ENCODE measurements at regions of chr1 and their contacts with region 1.

Region 1: GRCh38 chr1:40476924-40477677 is at the start of gene ZFP69:
- DNase-seq: peak; percentile 79
- ATAC-seq: peak; percentile 97
- H3K4me3 Mint-ChIP-seq: peak within 1 kb of the TSS; percentile 85
- H3K27ac Mint-ChIP-seq: peak within 1 kb of the TSS; percentile 87
- H3K4me1 Mint-ChIP-seq: peaks cover 17% of the 10 kb centered on the region
- H3K27me3 Mint-ChIP-seq: no peaks in the 10 kb centered on the region
- CTCF ChIP-seq: no peak
- total RNA-seq, gene ZFP69: 4.5 and 5.1 TPM in 2 replicates

Region 2: DNA sequence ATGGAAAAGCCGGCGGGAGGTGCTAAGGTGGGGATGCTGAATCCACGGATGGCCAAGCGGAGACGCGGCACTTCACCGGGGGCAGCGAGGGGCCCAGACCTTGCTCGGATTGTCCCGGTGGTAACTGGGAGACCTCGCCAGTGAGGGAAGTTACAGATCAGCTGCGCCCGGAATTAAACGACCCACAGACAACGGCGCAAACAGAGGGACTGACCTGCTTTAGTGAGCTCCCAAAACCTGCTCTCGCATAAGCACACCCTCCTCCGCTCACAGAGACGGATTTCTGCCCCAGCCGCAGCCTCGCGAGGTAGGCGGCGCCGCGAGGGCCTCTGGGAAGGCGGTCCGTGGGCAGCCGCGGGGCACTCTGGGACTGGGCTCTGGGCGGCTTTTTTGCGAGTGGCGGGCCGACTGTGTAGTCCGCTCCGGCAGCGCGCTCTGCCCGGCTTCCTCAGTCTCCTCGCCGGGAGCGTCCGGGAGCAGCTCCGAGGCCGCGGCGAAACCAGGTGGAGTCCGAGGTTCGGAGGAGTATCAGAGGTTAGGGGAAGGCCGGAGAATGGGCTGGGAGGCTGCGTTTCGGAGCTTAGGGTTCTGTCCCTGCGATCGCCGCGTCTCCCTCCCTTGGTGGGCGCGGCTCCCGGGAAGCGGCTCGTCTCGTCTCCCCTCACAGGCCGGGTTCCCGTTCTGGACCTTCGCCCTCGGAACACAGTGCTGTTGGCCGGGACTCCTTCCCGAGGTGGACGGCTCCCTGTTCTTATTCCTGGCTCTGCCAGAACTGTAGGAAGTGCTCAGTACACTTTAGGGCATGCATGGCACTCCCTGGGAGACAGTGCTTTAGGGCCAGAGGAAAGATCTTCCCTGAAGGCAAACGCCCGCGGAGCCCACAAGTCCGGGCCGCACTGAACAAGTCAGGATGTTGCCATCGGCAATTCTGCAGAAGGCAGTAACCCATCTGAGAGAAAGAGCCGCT is 31.6 kb after region 1 on chr1 and contains the start of gene EXO5:
- CTCF ChIA-PET with region 1: no interaction called
- POLR2A ChIA-PET with region 1: interaction called, 10 read pairs
- intact Hi-C with region 1: loop called (anchors 1 kb)
- DNase-seq: peak; percentile 78
- ATAC-seq: peak; percentile 98
- H3K4me3 Mint-ChIP-seq: peak within 1 kb of the TSS; percentile 94
- H3K27ac Mint-ChIP-seq: peak within 1 kb of the TSS; percentile 81
- H3K4me1 Mint-ChIP-seq: peaks cover 18% of the 10 kb centered on the region
- H3K27me3 Mint-ChIP-seq: no peaks in the 10 kb centered on the region
- CTCF ChIP-seq: no peak
- total RNA-seq, gene EXO5: 11.4 and 13.8 TPM in 2 replicates

Region 3: DNA sequence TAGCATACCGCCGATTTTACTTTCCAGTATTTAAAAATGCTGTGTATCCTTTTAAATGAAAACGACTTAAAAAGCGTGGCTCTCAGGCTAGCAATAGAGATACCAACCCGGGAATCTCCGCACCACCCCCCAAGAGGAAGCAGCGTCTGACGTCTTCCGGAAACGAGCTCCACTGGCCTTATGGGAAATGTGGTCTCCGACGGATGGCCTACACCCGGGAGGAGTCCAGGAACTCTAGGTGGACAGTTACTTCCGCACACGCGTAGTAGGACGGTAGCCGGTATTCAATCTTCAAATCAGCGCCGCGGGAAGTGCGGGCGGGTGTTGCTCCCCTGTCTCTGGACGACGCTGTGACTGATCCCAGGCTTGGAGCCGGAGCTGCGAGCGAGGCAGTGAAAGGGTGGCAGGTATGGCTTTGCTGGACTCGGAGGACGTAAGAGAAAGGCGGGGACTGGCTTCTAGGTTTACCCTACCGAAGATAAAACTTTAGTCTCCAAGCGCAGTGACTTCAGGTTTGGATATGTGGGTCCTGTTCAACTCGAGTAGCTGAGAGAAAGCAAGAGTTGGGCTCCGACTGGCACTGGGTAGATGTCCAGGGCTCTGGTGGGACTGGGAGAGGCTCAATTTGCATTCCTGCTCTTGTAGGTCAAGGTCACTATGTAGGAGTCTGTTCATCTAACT is 54.4 kb after region 1 on chr1 and contains the start of gene ZNF684:
- CTCF ChIA-PET with region 1: interaction called, 5 read pairs
- POLR2A ChIA-PET with region 1: interaction called, 3 read pairs
- intact Hi-C with region 1: loop called (anchors 2 kb)
- DNase-seq: peak; percentile 65
- ATAC-seq: peak; percentile 98
- H3K4me3 Mint-ChIP-seq: peak within 1 kb of the TSS; percentile 97
- H3K27ac Mint-ChIP-seq: peak within 1 kb of the TSS; percentile 92
- H3K4me1 Mint-ChIP-seq: peaks cover 29% of the 10 kb centered on the region
- H3K27me3 Mint-ChIP-seq: peaks cover 2% of the 10 kb centered on the region
- CTCF ChIP-seq: no peak
- total RNA-seq, gene ZNF684: 5.0 and 5.4 TPM in 2 replicates

Measured in activated B cell treated with CpG ODN at 0.5 μM for 24 hours (primary cell).